Transverse colon (tissue), 4 donors: ENCODE measurements at regions of chr6 and their contacts with region 1.

Region 1: GRCh38 chr6:158213925-158214674 is 46.0 kb downstream of the GTF2H5 start:
- DNase-seq: peak; percentile 70
- H3K4me3 ChIP-seq: no peak overlapping the region
- H3K27ac ChIP-seq: no peak overlapping the region
- H3K4me1 ChIP-seq: no peaks in the 10 kb centered on the region
- H3K27me3 ChIP-seq: no peaks in the 10 kb centered on the region
- CTCF ChIP-seq: peak; percentile 65 to 77 (median 69)
- EP300 ChIP-seq: no peak
- POLR2A ChIP-seq: no peak

Region 2: DNA sequence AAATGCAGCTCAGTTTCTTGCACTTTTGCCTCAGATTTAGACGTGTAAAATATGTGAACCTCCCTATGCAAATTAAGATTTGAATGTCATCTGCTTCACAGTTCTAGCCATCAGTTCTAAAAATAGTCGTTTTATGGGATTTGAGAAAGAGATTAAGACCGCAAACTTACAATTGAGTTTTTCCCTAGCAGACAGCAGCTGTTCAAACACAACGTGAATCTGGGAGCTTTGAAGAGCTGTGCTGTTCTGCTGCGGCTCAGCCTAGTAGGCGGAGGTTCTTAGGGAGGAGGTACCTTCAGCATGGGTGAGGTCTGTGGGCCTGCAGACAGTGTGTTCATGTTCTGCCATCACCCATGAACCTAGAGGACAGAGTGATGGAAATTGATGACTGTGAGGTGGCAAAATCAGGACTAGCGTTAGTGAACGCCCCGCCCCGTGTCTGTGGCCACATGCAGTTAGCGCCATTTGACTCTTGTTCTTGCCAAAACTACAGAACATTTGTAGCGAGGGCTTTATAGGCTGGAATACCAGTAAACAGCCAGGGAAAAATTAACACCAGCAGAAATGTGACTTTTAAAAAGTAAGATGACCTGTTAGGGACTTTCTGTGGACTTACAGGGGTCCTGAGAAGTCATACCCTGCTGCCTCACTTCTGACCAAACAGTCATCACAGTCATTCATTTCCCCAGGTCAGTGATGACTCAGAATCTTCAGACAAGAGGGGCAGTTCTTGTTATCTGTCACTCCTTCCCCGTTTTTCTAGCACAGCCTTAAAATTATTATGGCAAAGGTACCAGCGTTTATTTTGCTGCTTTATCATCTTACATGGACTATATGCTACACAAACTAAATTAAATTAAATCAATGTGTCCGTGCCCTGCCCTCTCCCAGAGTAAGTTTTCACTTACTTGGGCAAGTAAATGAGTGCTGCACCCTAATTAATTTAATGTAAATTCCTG is 261.5 kb after region 1 on chr6:
- in situ Hi-C with region 1: loop called in 1 of 4 experiments (anchors 25 kb)
- intact Hi-C with region 1: no loop called
- DNase-seq: peak; percentile 26
- H3K4me3 ChIP-seq: no peak overlapping the region
- H3K27ac ChIP-seq: peak overlapping the region in 1 of 4 donors; percentile 5
- H3K4me1 ChIP-seq: peaks cover 0 to 29% (median 14%) of the 10 kb centered on the region in 4 donors
- H3K27me3 ChIP-seq: no peaks in the 10 kb centered on the region
- CTCF ChIP-seq: no peak
- EP300 ChIP-seq: no peak
- POLR2A ChIP-seq: no peak

Region 3: GRCh38 chr6:158605266-158605878 is 391.3 kb after region 1 on chr6:
- in situ Hi-C with region 1: loop called in 3 of 4 experiments (anchors 5 to 25 kb)
- intact Hi-C with region 1: no loop called
- DNase-seq: peak; percentile 73
- H3K4me3 ChIP-seq: no peak overlapping the region
- H3K27ac ChIP-seq: no peak overlapping the region
- H3K4me1 ChIP-seq: no peaks in the 10 kb centered on the region
- H3K27me3 ChIP-seq: no peaks in the 10 kb centered on the region
- CTCF ChIP-seq: peak; percentile 65 to 84 (median 74)
- EP300 ChIP-seq: no peak
- POLR2A ChIP-seq: no peak

Region 4: GRCh38 chr6:158686791-158687381 is 472.8 kb after region 1 on chr6:
- in situ Hi-C with region 1: loop called in 2 of 4 experiments (anchors 10 to 25 kb)
- intact Hi-C with region 1: no loop called
- DNase-seq: peak; percentile 13
- H3K4me3 ChIP-seq: no peak overlapping the region
- H3K27ac ChIP-seq: peak overlapping the region; percentile 42 to 60 (median 52)
- H3K4me1 ChIP-seq: peaks cover 0 to 26% (median 4%) of the 10 kb centered on the region in 4 donors
- H3K27me3 ChIP-seq: no peaks in the 10 kb centered on the region
- CTCF ChIP-seq: no peak
- EP300 ChIP-seq: no peak
- POLR2A ChIP-seq: peak; percentile 23

Region 5: DNA sequence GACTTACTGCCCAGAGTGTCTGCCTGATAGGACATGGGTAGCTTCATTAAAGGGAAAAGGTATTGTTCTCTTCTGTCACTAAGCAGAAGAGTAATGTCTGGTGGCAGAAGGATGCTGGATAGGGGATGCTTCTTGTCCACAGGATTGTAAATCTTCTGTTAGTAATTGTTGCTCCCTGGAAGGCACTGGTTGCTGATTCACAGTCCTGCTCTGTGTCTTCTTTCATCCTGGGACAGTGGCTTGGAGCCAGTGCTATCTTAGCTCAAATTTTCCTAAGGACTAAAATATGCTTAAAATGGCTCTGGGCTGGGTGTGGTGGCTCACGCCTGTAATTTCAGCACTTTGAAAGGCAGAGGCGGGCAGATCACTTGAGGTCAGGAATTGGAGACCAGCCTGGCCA is 483.7 kb after region 1 on chr6:
- in situ Hi-C with region 1: loop called in 2 of 4 experiments (anchors 10 to 25 kb)
- intact Hi-C with region 1: no loop called
- DNase-seq: no peak
- H3K4me3 ChIP-seq: no peak overlapping the region
- H3K27ac ChIP-seq: no peak overlapping the region
- H3K4me1 ChIP-seq: no peaks in the 10 kb centered on the region
- H3K27me3 ChIP-seq: no peaks in the 10 kb centered on the region
- CTCF ChIP-seq: no peak
- EP300 ChIP-seq: no peak
- POLR2A ChIP-seq: no peak

Region 6: DNA sequence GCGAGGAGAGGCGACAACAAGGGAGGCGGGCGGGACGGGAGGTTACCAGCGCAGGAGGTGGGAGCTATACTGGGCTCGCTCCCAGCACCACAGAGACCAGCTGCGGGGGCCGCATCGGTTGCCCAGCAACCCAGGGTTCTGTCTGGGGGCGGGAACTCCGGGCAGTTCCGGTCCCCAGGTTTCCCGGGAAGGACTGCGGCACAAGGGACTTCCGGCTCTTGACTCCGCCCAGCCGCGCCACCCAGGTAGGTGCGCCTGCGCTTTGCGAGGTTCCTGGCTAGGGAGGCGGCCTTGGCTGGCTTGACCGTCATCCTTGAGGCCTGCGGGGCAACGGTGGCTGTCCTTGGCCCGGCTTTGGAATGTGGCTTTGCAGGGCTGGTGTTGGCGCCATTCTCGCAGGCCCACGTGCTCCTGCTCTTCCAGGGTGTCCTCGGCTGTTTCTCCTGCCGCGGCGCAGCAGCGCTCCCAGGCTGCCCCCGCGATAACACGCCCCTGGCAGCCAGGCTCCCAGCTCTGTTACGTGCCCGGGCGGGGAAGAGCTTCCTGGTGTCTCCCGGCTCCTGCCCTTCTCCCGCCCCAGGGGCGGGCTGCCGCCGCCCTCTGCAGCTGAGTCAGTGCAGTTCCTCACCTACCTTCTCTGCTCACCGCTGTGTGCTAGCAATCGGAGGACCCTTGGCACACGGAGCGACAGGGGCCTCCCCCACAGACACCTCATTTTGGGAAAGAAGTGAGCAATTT is 785.7 kb after region 1 on chr6 and contains the start of gene RSPH3:
- in situ Hi-C with region 1: loop called in 1 of 4 experiments (anchors 25 kb)
- intact Hi-C with region 1: no loop called
- DNase-seq: peak; percentile 97
- H3K4me3 ChIP-seq: peak within 1 kb of the TSS; percentile 58 to 98 (median 85)
- H3K27ac ChIP-seq: peak within 1 kb of the TSS; percentile 90 to 95 (median 92)
- H3K4me1 ChIP-seq: peaks cover 0 to 20% (median 10%) of the 10 kb centered on the region in 4 donors
- H3K27me3 ChIP-seq: no peaks in the 10 kb centered on the region
- CTCF ChIP-seq: peak in 2 of 5 experiments; percentile 5 to 17
- EP300 ChIP-seq: no peak
- POLR2A ChIP-seq: peak; percentile 91
- total RNA-seq, gene RSPH3: 13.3 to 24.1 (median 23.5) TPM

Region 7: GRCh38 chr6:159134701-159135364 is 920.7 kb after region 1 on chr6:
- in situ Hi-C with region 1: loop called in 1 of 4 experiments (anchors 25 kb)
- intact Hi-C with region 1: no loop called
- DNase-seq: peak; percentile 80
- H3K4me3 ChIP-seq: no peak overlapping the region
- H3K27ac ChIP-seq: no peak overlapping the region
- H3K4me1 ChIP-seq: no peaks in the 10 kb centered on the region
- H3K27me3 ChIP-seq: peaks cover 21% of the 10 kb centered on the region
- CTCF ChIP-seq: peak; percentile 81 to 93 (median 93)
- EP300 ChIP-seq: no peak
- POLR2A ChIP-seq: no peak